HEK293 (cell line): ENCODE measurements at regions of chr7 and their contacts with region 1.

Region 1: DNA sequence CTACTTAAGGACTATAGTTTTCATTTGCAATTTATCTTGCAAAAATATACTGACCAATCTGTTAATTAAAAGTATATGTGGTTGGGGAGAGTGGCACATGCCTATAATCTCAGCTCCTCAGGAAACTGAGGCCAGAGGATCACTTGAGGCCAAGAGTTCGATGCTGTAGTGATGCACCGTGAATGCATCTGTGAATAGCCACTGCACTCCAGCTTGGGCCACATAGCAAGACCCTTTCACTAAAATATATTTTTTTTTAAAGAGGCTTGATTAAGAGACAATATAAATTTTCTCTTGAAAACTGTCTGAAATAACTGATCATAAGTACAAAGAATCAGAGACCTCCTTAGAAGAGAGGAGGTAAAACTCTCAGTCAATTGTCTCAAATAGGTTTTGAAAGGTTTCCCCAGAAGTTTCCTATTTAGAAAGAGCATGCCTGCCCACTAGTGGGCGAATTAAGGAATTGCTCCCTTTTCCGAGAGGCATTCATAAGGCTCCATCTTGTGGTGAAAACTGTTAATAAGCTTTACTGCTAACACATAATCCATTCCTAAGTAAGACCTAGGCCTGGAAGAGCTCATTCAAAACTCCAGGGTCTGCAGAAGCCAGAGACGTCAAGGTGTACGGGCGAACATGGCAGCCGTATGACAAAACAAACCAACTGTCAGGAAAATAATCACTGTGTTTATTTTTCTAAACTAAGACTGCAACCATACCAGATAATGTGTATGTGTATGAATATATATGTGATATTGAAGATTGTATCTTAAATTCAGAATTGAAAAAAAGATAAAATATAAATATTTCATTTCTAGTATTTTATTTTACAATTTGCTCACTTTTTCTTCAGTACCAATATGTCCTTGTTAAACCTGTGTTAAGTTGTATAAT is 6.8 kb upstream of the TAS2R40 start:
- H3K4me3 ChIP-seq: no peak overlapping the region
- H3K27ac ChIP-seq: no peak overlapping the region
- H3K4me1 ChIP-seq: no peaks in the 10 kb centered on the region
- CTCF ChIP-seq: peak; percentile 87

Region 2: DNA sequence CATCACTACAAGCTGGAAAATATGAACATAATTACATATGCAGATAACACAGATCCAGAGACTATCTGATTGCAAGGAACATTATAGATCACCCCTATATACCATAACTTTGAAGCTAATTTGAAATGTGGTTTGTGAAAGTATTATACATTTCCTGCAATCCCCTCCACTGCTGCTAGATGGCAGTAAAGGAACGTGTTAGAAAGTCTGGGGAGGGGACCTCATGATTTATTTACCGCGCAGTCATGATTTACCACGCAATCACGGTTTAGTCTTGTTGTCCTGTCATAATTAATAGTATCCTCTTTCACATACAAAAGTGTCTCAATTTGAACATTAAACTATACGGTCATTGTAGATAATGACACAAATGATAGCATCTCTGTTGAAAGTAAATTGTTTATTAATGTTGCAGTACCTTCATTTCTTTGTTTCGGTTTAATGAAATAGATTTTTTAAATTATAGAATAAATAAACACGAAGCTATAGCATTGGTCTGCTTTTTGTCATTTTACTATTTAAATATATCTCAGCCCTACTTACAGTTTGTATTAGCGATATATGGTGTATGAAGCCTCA is 611.1 kb before region 1 on chr7:
- CTCF ChIA-PET with region 1: interaction called, 12 read pairs
- POLR2A ChIA-PET with region 1: no interaction called
- H3K4me3 ChIP-seq: no peak overlapping the region
- H3K27ac ChIP-seq: no peak overlapping the region
- H3K4me1 ChIP-seq: no peaks in the 10 kb centered on the region
- CTCF ChIP-seq: peak; percentile 40; the same call in 1 of the 2 replicates

Region 3: DNA sequence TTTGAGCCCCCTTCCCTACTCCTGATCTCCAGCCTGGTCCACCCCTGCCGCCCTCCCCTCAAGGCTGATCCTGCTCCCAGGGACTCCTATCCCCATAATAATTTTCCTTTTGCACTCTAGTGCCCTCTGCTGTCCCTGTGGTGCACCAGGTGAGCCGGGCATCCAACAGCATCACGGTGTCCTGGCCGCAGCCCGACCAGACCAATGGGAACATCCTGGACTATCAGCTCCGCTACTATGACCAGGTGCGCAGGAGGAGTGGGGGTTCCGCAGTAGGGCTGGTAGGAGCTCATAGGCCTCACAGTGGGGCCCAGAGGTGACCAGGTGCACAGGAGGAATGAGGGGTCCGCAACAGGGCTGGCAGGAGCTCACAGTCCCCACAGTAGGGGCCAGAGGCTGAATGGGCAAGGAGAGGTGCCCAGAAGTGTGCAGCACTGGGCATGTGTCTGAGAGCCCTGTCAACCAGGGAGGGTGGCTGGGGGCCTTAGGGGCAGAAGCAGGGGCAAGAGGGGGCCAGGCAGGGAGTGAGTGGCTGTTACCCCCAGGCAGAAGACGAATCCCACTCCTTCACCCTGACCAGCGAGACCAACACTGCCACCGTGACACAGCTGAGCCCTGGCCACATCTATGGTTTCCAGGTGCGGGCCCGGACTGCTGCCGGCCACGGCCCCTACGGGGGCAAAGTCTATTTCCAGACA is 348.5 kb before region 1 on chr7:
- CTCF ChIA-PET with region 1: interaction called, 37 read pairs
- POLR2A ChIA-PET with region 1: no interaction called
- H3K4me3 ChIP-seq: no peak overlapping the region
- H3K27ac ChIP-seq: no peak overlapping the region
- H3K4me1 ChIP-seq: no peaks in the 10 kb centered on the region
- CTCF ChIP-seq: peak; percentile 38; the same call in 1 of the 2 replicates

Region 4: GRCh38 chr7:142898377-142899170 is 316.5 kb before region 1 on chr7:
- CTCF ChIA-PET with region 1: interaction called, 16 read pairs
- POLR2A ChIA-PET with region 1: no interaction called
- H3K4me3 ChIP-seq: no peak overlapping the region
- H3K27ac ChIP-seq: no peak overlapping the region
- H3K4me1 ChIP-seq: no peaks in the 10 kb centered on the region
- CTCF ChIP-seq: no peak

Region 5: DNA sequence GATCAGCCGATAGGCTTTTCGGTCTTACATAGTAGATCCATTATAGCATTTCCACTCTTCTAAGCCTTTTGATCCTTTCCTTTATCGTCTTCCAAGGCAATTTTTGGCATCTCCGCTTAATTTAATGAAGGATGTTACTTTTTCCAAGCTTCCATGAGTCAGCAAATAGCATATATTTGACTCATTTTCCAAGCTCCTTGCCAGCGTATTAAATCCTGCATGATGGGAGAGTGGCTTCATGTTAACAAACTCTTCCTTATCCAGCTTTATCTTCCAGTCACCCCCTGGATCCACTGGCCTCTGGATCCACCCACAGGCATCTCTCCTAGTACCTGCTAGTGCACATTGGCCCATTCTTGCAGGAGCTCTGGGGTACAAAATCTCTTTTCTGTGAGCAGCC is 201.1 kb before region 1 on chr7:
- CTCF ChIA-PET with region 1: interaction called, 148 read pairs
- POLR2A ChIA-PET with region 1: no interaction called
- H3K4me3 ChIP-seq: no peak overlapping the region
- H3K27ac ChIP-seq: no peak overlapping the region
- H3K4me1 ChIP-seq: no peaks in the 10 kb centered on the region
- CTCF ChIP-seq: no peak

Region 6: GRCh38 chr7:143181349-143181748 is 33.7 kb before region 1 on chr7:
- CTCF ChIA-PET with region 1: no interaction called
- POLR2A ChIA-PET with region 1: no interaction called
- H3K4me3 ChIP-seq: no peak overlapping the region
- H3K27ac ChIP-seq: no peak overlapping the region
- H3K4me1 ChIP-seq: no peaks in the 10 kb centered on the region
- CTCF ChIP-seq: no peak

Region 7: GRCh38 chr7:143240291-143241168 is 25.5 kb after region 1 on chr7:
- CTCF ChIA-PET with region 1: interaction called, 13 read pairs
- POLR2A ChIA-PET with region 1: no interaction called
- H3K4me3 ChIP-seq: no peak overlapping the region
- H3K27ac ChIP-seq: no peak overlapping the region
- H3K4me1 ChIP-seq: no peaks in the 10 kb centered on the region
- CTCF ChIP-seq: peak; percentile 39; the same call in 1 of the 2 replicates